ENCODE measurements at regions of chr6 and their contacts with region 1.

Region 1: DNA sequence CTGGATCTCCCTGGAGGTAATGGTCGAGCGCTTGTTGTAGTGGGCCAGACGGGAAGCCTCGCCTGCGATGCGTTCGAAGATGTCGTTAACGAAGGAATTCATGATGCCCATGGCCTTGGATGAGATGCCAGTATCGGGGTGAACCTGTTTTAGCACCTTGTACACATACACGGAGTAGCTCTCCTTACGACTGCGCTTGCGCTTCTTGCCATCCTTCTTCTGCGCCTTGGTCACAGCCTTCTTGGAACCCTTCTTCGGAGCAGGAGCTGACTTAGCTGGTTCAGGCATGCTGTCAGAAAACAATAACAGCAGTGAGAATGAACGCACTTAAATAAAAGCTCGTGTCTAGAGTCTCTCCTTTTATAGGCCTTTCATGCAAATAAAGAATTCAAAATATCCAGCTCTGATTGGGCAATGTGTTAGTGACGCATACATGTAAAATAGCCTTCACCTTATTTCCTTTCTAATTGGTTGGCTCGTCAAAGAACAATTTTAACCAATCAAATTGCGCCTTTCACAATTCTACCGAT is 129.2 kb downstream of the HFE start:
- DNase-seq: peak; percentile 86
- H3K4me3 Mint-ChIP-seq: no peak overlapping the region
- H3K27ac Mint-ChIP-seq: no peak overlapping the region
- H3K4me1 Mint-ChIP-seq: peaks cover 11% of the 10 kb centered on the region
- H3K27me3 Mint-ChIP-seq: no peaks in the 10 kb centered on the region

Region 2: GRCh38 chr6:26054857-26055669 is 161.4 kb before region 1 on chr6:
- intact Hi-C with region 1: loop called (anchors 2 kb)
- DNase-seq: peak; percentile 83
- H3K4me3 Mint-ChIP-seq: peak overlapping the region; percentile 91
- H3K27ac Mint-ChIP-seq: peak overlapping the region; percentile 99
- H3K4me1 Mint-ChIP-seq: peaks cover 42% of the 10 kb centered on the region
- H3K27me3 Mint-ChIP-seq: peaks cover 3% of the 10 kb centered on the region

Region 3: GRCh38 chr6:26204332-26205165 is 11.9 kb before region 1 on chr6:
- intact Hi-C with region 1: loop called (anchors 1 kb)
- DNase-seq: peak; percentile 82
- H3K4me3 Mint-ChIP-seq: no peak overlapping the region
- H3K27ac Mint-ChIP-seq: no peak overlapping the region
- H3K4me1 Mint-ChIP-seq: peaks cover 33% of the 10 kb centered on the region
- H3K27me3 Mint-ChIP-seq: peaks cover 2% of the 10 kb centered on the region

Region 4: GRCh38 chr6:26249957-26250697 is 33.7 kb after region 1 on chr6:
- intact Hi-C with region 1: loop called (anchors 1 kb)
- DNase-seq: peak; percentile 68
- H3K4me3 Mint-ChIP-seq: peak overlapping the region; percentile 90
- H3K27ac Mint-ChIP-seq: peak overlapping the region; percentile 99
- H3K4me1 Mint-ChIP-seq: peaks cover 55% of the 10 kb centered on the region
- H3K27me3 Mint-ChIP-seq: peaks cover 2% of the 10 kb centered on the region